ENCODE measurements at regions of chr13 and their contacts with region 1.

Region 1: DNA sequence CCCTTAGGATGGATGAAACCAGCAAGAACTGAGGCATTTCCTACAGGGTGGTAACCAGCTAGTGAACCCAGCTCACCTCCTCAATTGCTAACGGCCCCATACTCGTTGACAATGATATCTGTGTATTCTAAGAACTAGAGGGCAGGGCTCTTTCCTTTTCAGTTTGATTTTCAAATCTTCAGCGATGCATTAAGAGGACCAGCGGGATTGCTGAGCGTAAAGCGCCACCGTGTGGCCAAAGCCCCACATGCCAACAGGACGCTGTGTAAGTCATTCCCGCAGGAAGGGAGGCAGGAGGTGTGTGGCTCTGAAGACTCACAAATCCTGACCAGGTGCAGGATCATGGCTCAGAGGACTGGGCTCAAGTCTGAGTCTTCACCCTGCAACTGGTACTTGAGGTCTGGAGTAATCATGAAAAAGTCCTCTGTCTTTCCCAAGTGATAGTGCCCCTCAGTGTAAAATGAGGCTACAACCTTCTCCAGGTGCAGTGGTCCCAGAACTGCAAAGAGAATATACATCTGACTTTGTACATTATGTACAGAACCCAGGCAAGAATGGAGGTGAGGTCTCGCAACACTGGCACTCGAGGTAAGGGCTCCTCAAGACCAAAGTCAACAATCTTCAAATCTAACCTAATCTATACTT is 40.9 kb downstream of the C13orf42 start:
- DNase-seq: peak; percentile 61 to 69 (median 64)
- H3K4me3 ChIP-seq: no peak overlapping the region
- H3K4me3 Mint-ChIP-seq: no peak overlapping the region
- H3K27ac ChIP-seq: no peak overlapping the region
- H3K27ac Mint-ChIP-seq: peak overlapping the region in 3 of 7 donors; percentile 9 to 24 (median 11)
- H3K4me1 ChIP-seq: peaks cover 7% of the 10 kb centered on the region
- H3K4me1 Mint-ChIP-seq: peaks cover 5 to 8% (median 7%) of the 10 kb centered on the region in 4 donors
- H3K27me3 ChIP-seq: no peaks in the 10 kb centered on the region
- H3K27me3 Mint-ChIP-seq: peaks cover 11 to 13% of the 10 kb centered on the region in 2 donors

Region 2: DNA sequence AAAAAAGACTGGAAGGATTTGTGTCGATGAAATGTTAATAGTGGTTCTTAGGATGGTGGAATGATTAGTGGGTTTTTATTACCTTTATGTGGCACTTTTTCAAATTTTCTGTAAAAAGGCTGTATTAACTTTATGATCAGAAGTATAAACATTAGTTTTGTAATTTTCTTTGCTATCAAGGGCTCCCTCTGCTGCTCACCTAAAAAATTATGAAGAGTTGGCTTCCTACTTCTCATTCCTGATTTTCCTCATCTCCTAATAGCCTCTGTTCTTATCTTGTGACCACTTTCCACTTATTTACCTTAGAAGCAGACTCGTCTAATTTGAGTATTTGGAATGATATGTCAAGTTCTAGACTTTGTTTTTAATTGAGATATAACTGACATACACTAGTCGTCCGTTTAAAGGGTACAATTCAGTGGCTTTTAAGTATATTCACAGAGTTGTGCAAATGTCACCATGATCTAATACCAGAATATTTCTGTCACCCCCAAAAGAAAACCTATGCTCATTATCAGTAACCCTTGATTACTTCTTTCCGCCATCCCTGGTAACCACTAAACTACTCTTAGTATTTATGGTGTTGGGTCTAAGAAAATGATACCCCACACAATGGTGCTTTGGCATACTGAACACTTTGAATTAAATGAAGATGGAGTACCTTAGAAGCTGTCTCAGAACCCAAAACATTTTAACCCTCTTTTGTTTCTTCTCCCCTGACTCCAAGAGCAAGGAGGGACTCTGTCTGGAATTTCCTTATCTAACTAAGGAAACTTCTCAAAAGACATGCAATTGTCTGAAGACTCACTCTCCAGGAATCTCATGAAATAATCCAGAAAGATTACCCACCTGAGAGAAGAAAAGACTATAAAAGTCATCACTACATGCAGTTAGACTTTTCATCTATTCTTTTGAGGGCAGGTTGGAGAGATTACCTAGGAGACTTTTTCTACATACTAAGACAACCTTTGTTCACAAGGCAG is 537.9 kb before region 1 on chr13:
- CTCF ChIA-PET with region 1: no interaction called
- POLR2A ChIA-PET with region 1: no interaction called
- intact Hi-C with region 1: loop called (anchors 2 kb)
- DNase-seq: peak in 2 of 5 donors; percentile 14 to 18
- H3K4me3 ChIP-seq: no peak overlapping the region
- H3K4me3 Mint-ChIP-seq: no peak overlapping the region
- H3K27ac ChIP-seq: no peak overlapping the region
- H3K27ac Mint-ChIP-seq: no peak overlapping the region
- H3K4me1 ChIP-seq: peaks cover 18% of the 10 kb centered on the region
- H3K4me1 Mint-ChIP-seq: peaks cover 11 to 26% (median 22%) of the 10 kb centered on the region in 4 donors
- H3K27me3 ChIP-seq: no peaks in the 10 kb centered on the region
- H3K27me3 Mint-ChIP-seq: no peaks in the 10 kb centered on the region

Region 3: DNA sequence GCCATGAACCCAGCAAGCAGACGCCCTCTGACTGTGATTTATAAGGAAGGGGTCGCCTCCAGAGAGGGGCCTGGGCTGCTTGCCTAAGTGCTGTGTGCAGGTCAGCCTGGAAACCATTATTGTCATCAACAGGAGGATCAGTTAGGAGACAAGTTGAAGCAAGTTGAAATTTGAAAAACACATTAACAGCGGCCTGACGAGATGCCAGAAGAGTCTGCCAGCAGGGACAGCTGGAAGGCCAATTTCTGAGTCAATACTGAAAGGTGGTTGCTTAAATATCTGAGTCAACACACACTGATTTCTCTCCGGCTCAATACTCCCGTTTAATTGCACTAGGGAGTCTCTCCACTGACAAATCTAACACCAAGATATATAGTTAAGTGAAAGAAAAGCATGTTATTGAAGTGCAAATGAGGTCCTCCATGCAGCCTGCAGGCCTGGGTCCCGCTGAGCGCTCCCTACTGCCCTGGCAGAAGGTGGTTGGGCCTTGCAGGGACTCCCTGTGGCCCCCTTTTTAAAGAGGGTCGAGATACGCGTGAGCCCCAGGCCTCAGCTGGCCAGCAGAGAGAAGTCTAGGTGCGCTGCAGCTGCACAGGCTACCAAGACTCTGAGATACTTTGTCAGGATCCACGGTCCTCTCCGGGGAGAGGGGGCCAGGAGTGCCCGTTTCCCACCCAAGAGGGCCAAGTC is 69.4 kb before region 1 on chr13:
- CTCF ChIA-PET with region 1: no interaction called
- POLR2A ChIA-PET with region 1: no interaction called
- intact Hi-C with region 1: no loop called
- DNase-seq: no peak
- H3K4me3 ChIP-seq: no peak overlapping the region
- H3K4me3 Mint-ChIP-seq: no peak overlapping the region
- H3K27ac ChIP-seq: no peak overlapping the region
- H3K27ac Mint-ChIP-seq: no peak overlapping the region
- H3K4me1 ChIP-seq: no peaks in the 10 kb centered on the region
- H3K4me1 Mint-ChIP-seq: no peaks in the 10 kb centered on the region
- H3K27me3 ChIP-seq: peaks cover 5% of the 10 kb centered on the region
- H3K27me3 Mint-ChIP-seq: peaks cover 6 to 19% of the 10 kb centered on the region in 2 donors

Region 4: GRCh38 chr13:51058461-51059167 is 11.5 kb before region 1 on chr13:
- CTCF ChIA-PET with region 1: interaction called, 41 read pairs
- POLR2A ChIA-PET with region 1: no interaction called
- intact Hi-C with region 1: no loop called
- DNase-seq: no peak
- H3K4me3 ChIP-seq: no peak overlapping the region
- H3K4me3 Mint-ChIP-seq: no peak overlapping the region
- H3K27ac ChIP-seq: no peak overlapping the region
- H3K27ac Mint-ChIP-seq: peak overlapping the region in 1 of 7 donors; percentile 1
- H3K4me1 ChIP-seq: no peaks in the 10 kb centered on the region
- H3K4me1 Mint-ChIP-seq: no peaks in the 10 kb centered on the region
- H3K27me3 ChIP-seq: no peaks in the 10 kb centered on the region
- H3K27me3 Mint-ChIP-seq: peaks cover under 1 to 1% of the 10 kb centered on the region in 2 donors

Region 5: GRCh38 chr13:51181786-51182383 is 111.8 kb after region 1 on chr13:
- CTCF ChIA-PET with region 1: no interaction called
- POLR2A ChIA-PET with region 1: no interaction called
- intact Hi-C with region 1: no loop called
- DNase-seq: no peak
- H3K4me3 ChIP-seq: no peak overlapping the region
- H3K4me3 Mint-ChIP-seq: no peak overlapping the region
- H3K27ac ChIP-seq: no peak overlapping the region
- H3K27ac Mint-ChIP-seq: no peak overlapping the region
- H3K4me1 ChIP-seq: no peaks in the 10 kb centered on the region
- H3K4me1 Mint-ChIP-seq: no peaks in the 10 kb centered on the region
- H3K27me3 ChIP-seq: peaks cover 4% of the 10 kb centered on the region
- H3K27me3 Mint-ChIP-seq: peaks cover 24 to 33% of the 10 kb centered on the region in 2 donors

Region 6: GRCh38 chr13:51357928-51358595 is 287.9 kb after region 1 on chr13:
- CTCF ChIA-PET with region 1: no interaction called
- POLR2A ChIA-PET with region 1: no interaction called
- intact Hi-C with region 1: no loop called
- DNase-seq: no peak
- H3K4me3 ChIP-seq: no peak overlapping the region
- H3K4me3 Mint-ChIP-seq: no peak overlapping the region
- H3K27ac ChIP-seq: no peak overlapping the region
- H3K27ac Mint-ChIP-seq: no peak overlapping the region
- H3K4me1 ChIP-seq: no peaks in the 10 kb centered on the region
- H3K4me1 Mint-ChIP-seq: no peaks in the 10 kb centered on the region
- H3K27me3 ChIP-seq: no peaks in the 10 kb centered on the region
- H3K27me3 Mint-ChIP-seq: no peaks in the 10 kb centered on the region